ENCODE measurements at regions of chr5 and their contacts with region 1.

Region 1: GRCh38 chr5:136374003-136374402 is 8.7 kb upstream of the TRPC7 start:
- DNase-seq: peak; percentile 34
- H3K4me3 Mint-ChIP-seq: no peak overlapping the region
- H3K27ac Mint-ChIP-seq: no peak overlapping the region
- H3K4me1 Mint-ChIP-seq: no peaks in the 10 kb centered on the region
- H3K27me3 Mint-ChIP-seq: peaks cover 77% of the 10 kb centered on the region
- CTCF ChIP-seq: no peak

Region 2: DNA sequence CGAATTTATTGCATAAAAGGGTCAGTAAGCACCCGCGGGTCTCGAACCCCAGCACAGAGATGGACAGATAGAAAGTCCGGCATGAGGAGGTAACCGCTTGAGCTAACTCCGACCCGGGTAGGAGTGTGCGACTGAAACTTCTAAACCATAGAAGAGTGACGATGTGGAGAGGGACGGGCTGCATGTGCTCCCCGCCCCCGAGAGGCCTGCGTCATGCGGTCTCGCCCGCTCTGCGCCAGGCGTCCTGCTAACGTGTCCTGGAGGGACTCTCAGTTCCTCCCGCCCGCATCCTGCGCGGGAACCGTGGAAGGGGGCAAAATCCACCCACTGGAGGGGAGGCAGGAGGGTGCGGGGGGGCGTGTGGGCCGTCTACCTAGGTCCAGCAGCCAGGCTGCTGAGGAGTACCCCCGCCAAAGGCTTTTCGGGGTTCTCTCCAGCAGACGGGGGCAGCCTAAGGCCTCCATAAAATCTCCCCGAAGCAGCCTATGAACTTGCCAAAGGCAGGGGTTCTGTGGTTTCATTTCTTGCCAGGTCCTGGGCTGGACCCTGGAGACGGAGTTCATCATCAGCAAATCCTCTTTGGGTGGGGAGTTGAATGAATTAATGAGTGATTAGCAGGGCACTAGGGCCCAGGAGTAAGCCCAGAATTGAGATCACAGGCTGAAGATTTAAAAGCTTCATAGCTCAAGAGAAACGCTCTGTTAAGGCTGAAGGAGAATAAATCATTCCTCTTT is 293.4 kb before region 1 on chr5:
- CTCF ChIA-PET with region 1: no interaction called
- intact Hi-C with region 1: no loop called
- DNase-seq: peak; percentile 95
- H3K4me3 Mint-ChIP-seq: peak overlapping the region; percentile 71
- H3K27ac Mint-ChIP-seq: peak overlapping the region; percentile 99
- H3K4me1 Mint-ChIP-seq: no peaks in the 10 kb centered on the region
- H3K27me3 Mint-ChIP-seq: no peaks in the 10 kb centered on the region
- CTCF ChIP-seq: no peak

Region 3: GRCh38 chr5:136424835-136425584 is 51.0 kb after region 1 on chr5:
- CTCF ChIA-PET with region 1: no interaction called
- intact Hi-C with region 1: loop called (anchors 2 kb)
- DNase-seq: peak; percentile 91
- H3K4me3 Mint-ChIP-seq: no peak overlapping the region
- H3K27ac Mint-ChIP-seq: no peak overlapping the region
- H3K4me1 Mint-ChIP-seq: no peaks in the 10 kb centered on the region
- H3K27me3 Mint-ChIP-seq: peaks cover 76% of the 10 kb centered on the region
- CTCF ChIP-seq: peak; percentile 80

Region 4: DNA sequence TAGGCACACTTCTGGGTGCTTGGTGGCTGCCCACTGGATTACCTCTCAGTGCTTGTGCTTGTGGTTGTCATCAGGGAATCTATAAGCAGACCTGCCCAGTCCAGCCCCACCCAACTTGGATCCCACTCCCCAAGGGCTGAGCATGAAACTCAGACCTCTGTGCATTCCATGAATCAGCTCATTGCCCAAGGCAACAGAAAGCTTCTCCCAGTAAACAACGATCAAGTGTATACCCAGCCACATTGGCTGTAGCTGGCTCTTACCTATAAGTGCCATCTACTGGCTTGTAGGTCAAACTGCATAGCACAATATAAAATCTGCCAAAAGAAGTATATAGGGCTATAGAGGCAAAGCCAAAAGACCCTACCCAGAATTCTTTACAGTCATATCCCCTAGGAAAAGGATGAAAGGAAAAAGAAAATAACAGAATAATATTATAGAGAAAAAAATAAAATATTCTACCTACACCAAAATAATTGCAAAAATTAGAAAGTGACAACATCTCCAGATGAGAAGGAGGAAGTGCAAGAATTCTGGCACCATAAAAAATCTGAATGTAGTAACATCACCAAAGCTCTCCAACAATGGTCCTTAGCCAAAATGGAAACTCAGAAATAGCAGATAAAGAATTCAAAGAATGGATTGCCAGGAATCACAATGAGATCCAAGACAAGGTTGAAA is 312.3 kb after region 1 on chr5:
- CTCF ChIA-PET with region 1: no interaction called
- intact Hi-C with region 1: loop called (anchors 2 kb)
- DNase-seq: peak; percentile 10
- H3K4me3 Mint-ChIP-seq: no peak overlapping the region
- H3K27ac Mint-ChIP-seq: no peak overlapping the region
- H3K4me1 Mint-ChIP-seq: no peaks in the 10 kb centered on the region
- H3K27me3 Mint-ChIP-seq: no peaks in the 10 kb centered on the region
- CTCF ChIP-seq: no peak

Region 5: DNA sequence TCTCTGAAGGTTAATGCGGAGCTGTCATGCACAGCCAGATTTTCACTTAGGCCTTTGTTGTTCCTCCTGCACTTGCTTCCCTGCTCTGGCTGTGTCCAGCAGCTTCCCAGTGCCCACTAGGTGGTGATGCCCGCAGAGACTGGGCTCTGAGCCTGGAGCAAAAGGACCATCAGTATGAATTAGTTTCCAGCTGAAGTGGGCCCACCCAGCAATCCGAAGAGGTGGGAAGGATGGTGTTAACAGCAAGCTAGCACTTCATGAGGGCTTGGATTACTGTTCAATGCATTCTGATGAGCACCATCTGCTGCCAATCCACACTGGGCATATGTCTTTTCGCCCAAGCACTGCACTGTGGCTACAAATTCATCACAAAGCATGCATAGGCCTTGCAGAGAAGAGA is 666.0 kb after region 1 on chr5:
- CTCF ChIA-PET with region 1: no interaction called
- intact Hi-C with region 1: no loop called
- DNase-seq: no peak
- H3K4me3 Mint-ChIP-seq: no peak overlapping the region
- H3K27ac Mint-ChIP-seq: no peak overlapping the region
- H3K4me1 Mint-ChIP-seq: peaks cover 42% of the 10 kb centered on the region
- H3K27me3 Mint-ChIP-seq: no peaks in the 10 kb centered on the region
- CTCF ChIP-seq: no peak